AG04450 (cell line): ENCODE measurements at regions of chr2 and their contacts with region 1.

Region 1: DNA sequence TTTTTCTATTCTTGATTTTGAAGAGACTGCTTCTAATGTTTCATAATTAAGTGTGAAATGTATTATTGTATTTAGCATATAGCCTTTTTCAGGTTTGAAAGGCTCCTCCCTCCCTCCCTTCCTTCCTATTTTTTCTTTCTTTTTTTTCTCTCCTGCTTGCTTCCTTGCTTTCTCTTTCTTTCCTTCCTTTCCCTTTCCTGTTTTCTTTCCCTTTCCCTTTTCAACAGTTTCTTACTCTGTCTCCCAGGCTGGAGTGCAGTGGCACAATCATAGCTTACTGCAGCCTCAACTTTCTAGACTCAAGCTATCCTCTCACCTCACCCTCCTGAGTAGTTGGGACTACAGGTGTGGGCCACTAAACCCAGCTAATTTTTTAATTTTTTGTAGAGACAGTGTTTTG is 44.6 kb downstream of the RMDN2 start:
- DNase-seq: no peak
- H3K4me3 ChIP-seq: no peak overlapping the region
- H3K27ac ChIP-seq: no peak overlapping the region
- H3K27me3 ChIP-seq: no peaks in the 10 kb centered on the region
- CTCF ChIP-seq: no peak

Region 2: DNA sequence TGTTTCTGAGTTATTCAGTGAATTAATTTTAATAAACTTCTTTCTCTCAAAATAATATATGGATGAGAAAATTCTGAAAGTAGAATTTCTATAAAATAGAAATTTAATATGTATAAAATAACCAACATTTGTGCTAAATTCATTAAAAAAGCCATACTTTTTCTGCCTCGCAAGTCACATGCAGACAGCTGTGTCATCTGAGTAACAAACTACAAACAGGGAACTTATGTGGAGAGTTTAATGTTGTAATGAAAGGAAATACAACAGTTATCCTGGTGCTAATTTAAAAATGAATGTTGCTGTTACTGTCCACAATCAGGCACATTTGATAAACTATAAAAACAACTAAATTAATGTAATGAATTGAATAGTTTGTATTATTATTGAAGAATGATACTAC is 22.4 kb before region 1 on chr2:
- CTCF ChIA-PET with region 1: no interaction called
- POLR2A ChIA-PET with region 1: no interaction called
- DNase-seq: no peak
- H3K4me3 ChIP-seq: no peak overlapping the region
- H3K27ac ChIP-seq: no peak overlapping the region
- H3K27me3 ChIP-seq: no peaks in the 10 kb centered on the region
- CTCF ChIP-seq: no peak

Region 3: DNA sequence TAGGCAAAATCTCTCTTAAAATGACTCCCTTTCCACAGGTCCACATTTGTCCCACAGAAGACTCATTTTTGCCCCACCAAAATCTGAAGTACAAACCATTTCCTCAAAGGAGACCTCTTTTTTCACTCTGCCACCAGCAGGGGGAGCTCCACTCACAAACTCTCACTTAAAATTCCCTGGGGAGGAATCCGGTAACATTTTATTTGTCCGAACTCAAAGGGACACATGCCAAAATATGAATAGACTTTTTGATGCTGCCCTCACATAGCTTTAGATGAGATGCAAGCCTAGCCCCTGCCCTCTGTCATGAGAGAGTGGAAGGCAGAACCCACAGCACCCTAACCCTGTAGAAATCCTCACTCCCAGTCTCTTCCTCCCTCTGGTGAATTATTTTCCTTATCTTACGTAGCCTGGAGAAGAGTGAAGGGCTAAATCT is 12.4 kb after region 1 on chr2:
- CTCF ChIA-PET with region 1: interaction called, 10 read pairs
- POLR2A ChIA-PET with region 1: no interaction called
- DNase-seq: no peak
- H3K4me3 ChIP-seq: no peak overlapping the region
- H3K27ac ChIP-seq: no peak overlapping the region
- H3K27me3 ChIP-seq: no peaks in the 10 kb centered on the region
- CTCF ChIP-seq: peak; percentile 84